Esophagus muscularis mucosa (tissue), 4 donors: ENCODE measurements at regions of chr22 and their contacts with region 1.

Region 1: DNA sequence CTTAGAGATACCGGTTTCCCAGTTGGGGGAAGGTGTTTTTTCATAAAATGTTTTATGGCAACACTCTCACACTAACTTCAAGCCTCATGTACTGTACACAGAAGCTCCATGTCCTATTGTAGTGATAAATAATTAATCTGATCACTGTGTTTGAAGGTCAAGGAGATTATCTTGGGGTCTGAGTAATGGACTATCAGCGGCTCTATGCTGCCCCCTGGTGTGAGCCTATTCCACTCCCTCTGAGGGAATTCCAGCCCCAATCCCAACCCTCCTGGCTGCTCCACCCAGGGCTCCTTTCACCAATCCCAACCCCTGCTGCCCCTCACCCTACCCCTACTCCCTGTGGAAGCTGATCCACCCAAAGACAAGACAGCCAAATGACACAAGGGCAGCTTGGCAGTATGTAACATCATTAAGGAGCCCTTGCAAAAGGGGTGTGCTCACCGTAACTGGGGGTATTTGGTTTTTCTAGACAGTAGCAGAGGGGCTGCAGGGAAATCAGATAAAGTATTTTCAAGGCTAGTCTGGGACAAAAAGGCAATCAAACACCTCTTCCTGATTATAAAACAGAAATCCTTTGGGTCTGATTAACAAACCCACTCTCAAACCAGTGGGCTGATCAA is 22.3 kb downstream of the HPS4 start:
- DNase-seq: no peak
- H3K4me3 ChIP-seq: no peak overlapping the region
- H3K27ac ChIP-seq: no peak overlapping the region
- H3K4me1 ChIP-seq: peaks cover 0 to 11% (median 3%) of the 10 kb centered on the region in 4 donors
- H3K27me3 ChIP-seq: no peaks in the 10 kb centered on the region
- CTCF ChIP-seq: peak; percentile 58 to 73 (median 70)
- EP300 ChIP-seq: no peak
- POLR2A ChIP-seq: no peak

Region 2: DNA sequence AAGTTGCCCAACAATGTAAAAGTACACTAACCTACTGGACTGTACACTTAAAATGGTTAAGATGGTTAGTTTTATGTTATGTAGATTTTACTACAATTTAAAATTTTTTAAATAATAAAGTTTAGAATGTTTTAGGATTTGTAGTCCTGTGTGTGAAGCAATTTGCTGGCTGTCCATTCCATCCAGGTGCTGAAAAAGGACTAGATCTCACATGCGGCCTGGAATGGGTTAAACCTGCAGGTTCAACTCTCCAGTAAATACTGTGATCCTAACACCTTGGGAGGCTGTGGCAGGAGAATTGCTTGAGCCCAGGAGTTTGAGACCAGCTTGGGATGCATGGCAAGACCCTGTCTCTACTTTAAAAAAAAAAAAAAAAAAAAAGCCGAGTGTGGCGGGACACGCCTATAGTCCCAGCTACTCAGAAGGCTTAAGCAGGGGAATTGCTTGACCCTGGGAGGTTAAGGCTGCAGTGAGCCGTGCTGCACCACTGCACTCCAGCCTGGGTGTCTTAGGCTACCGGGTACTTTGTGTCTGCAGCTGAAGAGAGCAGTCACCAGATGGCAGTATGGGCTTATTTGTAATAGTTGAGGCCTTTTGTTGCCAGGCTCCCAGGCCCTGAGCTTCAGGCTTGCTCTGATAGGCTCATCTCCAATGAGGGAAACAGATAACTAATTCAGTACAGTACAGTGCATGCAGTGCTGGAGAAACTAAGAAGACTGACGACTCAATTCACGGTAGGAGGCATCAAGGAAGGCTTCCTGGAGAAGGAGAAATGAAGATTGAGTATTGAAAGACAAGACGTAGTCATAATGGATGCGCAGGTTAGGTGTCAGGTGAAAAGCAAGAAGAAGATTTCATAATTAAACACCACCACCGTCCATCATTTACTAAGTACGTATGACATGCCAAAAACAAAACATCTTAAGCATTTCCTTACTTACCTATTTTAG is 97.0 kb before region 1 on chr22:
- intact Hi-C with region 1: loop called (anchors 5 kb)
- DNase-seq: no peak
- H3K4me3 ChIP-seq: no peak overlapping the region
- H3K27ac ChIP-seq: no peak overlapping the region
- H3K4me1 ChIP-seq: peaks cover 4 to 8% (median 8%) of the 10 kb centered on the region in 4 donors
- H3K27me3 ChIP-seq: peaks cover 0 to 65% (median 2%) of the 10 kb centered on the region in 4 donors
- CTCF ChIP-seq: peak; percentile 44 to 60 (median 50)
- EP300 ChIP-seq: no peak
- POLR2A ChIP-seq: no peak

Region 3: GRCh38 chr22:26398741-26399153 is 62.6 kb before region 1 on chr22:
- intact Hi-C with region 1: loop called (anchors 2 kb)
- DNase-seq: no peak
- H3K4me3 ChIP-seq: no peak overlapping the region
- H3K27ac ChIP-seq: no peak overlapping the region
- H3K4me1 ChIP-seq: no peaks in the 10 kb centered on the region
- H3K27me3 ChIP-seq: peaks cover 0 to 20% (median 0%) of the 10 kb centered on the region in 4 donors
- CTCF ChIP-seq: peak; percentile 51 to 62 (median 58)
- EP300 ChIP-seq: no peak
- POLR2A ChIP-seq: no peak